Ovary (tissue), 10 donors: ENCODE measurements at regions of chr1 and their contacts with region 1.

Region 1: DNA sequence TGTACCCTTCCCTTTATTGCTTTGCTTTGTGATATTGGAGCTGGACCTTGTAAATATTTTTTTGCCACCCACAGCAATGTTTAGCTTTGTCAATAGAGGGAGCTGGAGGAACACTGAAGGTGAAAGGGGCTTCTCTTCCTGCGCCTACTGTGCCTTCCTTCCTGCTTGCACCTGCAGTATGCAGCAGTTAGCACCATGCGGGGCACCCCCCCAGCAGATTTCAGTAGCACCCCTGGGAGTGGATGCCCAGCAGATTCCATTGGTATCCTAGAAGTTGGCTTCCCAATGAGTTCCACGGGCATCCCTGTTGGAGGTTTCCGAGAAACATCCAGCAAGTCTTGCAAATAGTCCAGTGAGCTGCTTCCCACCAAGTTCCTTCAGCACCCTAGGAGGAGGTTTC is 25.6 kb downstream of the S100A10 start:
- DNase-seq: no peak
- H3K4me3 ChIP-seq: no peak overlapping the region
- H3K27ac ChIP-seq: no peak overlapping the region
- H3K4me1 ChIP-seq: no peaks in the 10 kb centered on the region
- H3K27me3 ChIP-seq: no peaks in the 10 kb centered on the region
- CTCF ChIP-seq: peak; percentile 29 to 35 (median 31)
- EP300 ChIP-seq: no peak
- POLR2A ChIP-seq: no peak

Region 2: DNA sequence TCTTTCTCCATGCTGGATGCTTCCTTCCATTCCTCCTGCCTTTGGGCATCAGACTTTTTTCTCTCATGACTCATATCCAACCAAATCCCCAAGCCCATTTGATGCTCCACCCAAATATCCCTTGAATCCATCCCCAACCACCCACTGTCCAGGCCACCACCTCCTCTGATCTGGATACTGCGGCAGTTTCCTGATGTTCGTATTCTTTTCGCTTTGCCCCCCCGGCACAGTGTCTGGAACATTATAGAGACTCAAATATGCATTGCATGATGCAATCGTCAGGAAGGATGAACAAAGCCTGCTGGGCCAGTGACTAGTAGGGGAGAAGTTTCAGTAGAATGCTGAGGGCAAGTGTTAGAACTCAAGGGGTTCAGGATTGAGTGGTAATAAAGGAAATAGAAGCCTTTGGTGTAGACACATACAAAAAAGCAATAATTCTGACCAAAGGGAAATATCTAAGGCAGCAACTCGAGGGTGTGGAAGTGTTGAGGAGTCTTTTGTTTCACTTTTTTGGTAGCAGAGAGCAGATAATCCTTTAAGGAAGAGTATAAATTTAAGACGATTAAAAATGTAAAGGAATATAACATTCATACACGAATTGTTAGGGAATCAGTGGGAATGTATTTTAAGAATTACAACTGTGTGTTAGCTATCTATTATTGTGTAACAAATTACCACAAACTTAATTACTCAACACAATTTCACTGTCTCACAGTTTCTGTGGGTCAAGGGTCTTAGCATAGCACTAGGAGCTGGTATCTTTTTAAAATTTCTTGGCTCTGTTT is 61.3 kb after region 1 on chr1:
- intact Hi-C with region 1: loop called in 1 of 4 experiments (anchors 10 kb)
- DNase-seq: no peak
- H3K4me3 ChIP-seq: no peak overlapping the region
- H3K27ac ChIP-seq: no peak overlapping the region
- H3K4me1 ChIP-seq: no peaks in the 10 kb centered on the region
- H3K27me3 ChIP-seq: no peaks in the 10 kb centered on the region
- CTCF ChIP-seq: no peak
- EP300 ChIP-seq: no peak
- POLR2A ChIP-seq: no peak

Region 3: DNA sequence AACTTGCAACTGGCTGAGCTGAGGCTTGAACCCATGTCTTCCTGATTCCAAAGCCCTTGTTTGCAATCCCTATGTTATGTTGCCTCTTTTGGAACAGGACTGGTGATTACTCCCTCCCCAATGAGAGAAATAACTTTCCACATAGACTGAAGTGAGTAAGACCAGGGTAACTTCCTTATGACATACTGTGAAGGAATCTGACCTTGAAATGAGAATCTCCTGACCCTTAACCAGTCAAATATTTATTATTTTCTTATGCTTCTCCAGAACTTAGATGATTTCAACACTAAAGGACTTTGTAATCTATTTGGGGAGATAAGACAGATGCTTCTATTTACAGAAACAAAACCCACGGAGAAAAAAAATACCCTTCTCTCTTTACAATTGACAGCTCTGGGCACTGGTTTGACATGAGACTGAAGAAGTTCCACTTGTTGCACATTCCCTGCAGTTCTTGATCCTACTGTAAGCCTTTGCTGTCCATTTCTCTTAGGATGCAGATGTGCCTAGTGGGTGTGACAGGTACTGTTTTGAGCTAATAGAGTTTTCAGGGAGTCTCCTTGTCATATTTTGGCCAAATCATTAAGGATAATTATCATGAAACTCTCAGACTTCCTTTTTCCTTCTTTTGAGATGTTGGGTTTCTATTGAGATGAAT is 194.9 kb after region 1 on chr1:
- intact Hi-C with region 1: no loop called
- DNase-seq: no peak
- H3K4me3 ChIP-seq: no peak overlapping the region
- H3K27ac ChIP-seq: no peak overlapping the region
- H3K4me1 ChIP-seq: peaks cover 1% of the 10 kb centered on the region
- H3K27me3 ChIP-seq: no peaks in the 10 kb centered on the region
- CTCF ChIP-seq: no peak
- EP300 ChIP-seq: no peak
- POLR2A ChIP-seq: no peak